BJ (cell line): ENCODE measurements at regions of chrX and their contacts with region 1.

Region 1: DNA sequence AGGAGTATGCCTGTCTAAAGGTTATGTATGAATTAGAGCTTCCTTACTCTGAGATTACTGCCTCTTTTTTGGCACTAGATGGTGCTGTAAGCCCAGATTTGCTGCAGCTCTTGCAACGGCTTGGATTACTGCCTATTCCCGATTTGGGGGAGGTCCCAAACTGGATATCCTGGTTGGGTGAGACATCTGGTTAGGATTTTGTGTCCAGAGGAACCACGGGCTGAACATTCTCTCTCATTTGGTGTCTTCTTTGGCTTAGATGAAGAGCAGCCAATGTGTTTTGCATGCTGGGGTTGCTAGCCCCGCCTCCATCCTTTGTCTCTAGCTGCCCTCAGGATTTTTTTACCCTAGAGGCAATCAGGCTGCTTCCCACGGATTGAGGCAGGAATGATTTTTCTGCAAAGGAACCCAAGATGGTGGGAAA is 31.9 kb downstream of the F8A1 start:
- DNase-seq: peak; percentile 31
- H3K4me3 ChIP-seq: no peak overlapping the region
- H3K27me3 ChIP-seq: no peaks in the 10 kb centered on the region
- CTCF ChIP-seq: peak; percentile 65

Region 2: DNA sequence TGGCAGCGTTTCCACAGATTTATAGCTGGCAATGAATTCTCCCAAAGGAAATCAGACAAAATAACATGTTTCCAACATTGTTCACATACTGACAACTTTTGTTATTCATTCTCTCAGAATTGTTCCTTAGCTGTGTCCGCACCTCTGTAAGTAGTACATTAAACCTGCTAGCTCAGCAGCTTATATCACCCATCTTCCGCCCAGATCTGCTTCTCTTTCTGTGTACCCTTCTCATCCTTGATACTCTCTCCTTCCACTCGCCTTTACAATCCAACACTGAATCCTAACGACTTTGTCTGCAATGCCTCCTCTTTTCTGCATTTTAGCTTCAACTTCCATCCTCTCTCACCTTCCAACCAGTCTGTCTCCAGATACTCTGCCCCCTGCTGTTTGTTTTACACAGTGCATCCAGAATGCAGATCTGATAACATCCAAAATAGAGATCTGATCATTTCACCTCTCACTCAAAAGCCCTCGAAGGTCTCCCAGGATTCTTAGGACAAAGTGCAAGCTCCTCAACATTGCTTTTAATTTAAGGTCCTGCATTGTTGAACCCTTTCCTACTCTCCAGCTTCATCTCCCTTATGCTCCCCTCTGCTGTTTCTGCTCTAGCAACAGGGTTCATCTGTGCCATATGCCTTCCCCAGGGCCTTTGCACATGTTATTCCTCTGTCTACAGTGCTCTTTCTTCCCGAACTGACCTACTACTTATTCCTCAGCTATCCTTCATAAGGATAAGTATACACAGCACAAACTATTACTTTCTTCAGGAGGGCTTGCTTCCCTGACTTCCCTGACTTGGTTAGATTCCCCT is 230.9 kb after region 1 on chrX:
- CTCF ChIA-PET with region 1: interaction called, 12 read pairs
- POLR2A ChIA-PET with region 1: no interaction called
- DNase-seq: no peak
- H3K4me3 ChIP-seq: no peak overlapping the region
- H3K27me3 ChIP-seq: no peaks in the 10 kb centered on the region
- CTCF ChIP-seq: peak; percentile 51